ENCODE measurements at regions of chr19 and their contacts with region 1.

Region 1: DNA sequence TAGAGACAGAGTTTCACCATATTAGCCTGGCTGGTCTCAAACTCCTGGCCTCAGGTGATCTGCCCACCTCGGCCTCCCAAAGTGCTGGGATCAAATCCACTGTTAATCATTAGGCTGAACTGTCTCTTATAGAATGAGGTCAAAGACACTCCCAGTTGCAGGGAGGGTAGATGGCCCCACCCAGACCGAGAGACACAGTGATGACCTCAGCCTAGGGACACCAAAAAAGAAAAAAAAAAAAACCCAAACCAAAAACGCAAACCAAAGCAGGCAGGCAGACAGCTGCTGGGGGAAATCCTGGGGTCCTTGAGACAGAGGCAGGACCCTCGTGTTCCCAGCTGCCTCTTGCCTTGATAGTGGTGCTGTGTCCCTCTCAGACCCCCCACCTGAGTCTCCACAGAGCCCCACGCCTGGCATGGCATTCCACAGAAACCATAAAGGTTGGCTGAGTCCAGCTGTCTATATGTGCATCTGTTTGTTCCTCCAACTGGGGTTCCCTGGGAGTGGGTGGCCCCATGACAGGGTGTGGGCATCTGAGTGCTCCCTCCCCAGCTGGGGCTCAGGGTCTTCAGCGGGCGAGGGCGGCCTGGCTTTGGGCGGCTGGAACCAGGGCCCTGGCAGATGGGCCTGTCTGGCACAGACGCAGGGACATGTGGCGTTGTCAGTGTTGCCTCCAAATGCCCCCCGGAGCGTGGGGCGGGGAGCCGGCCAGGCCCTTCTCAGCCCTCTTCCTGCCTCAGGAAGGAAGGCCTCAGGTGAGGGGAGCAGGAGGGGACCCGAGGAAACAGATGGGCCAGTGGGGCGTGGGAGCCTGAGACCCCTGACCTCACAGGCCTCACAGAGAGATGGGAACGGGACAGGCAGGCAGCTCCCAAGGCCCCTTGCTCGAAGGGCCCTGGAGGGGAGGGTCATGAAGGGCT is 5.2 kb downstream of the DAND5 start:
- DNase-seq: no peak
- H3K4me3 ChIP-seq: no peak overlapping the region
- H3K27ac ChIP-seq: no peak overlapping the region
- H3K4me1 ChIP-seq: no peaks in the 10 kb centered on the region
- H3K27me3 ChIP-seq: no peaks in the 10 kb centered on the region
- CTCF ChIP-seq: no peak
- POLR2A ChIP-seq: no peak

Region 2: GRCh38 chr19:12847159-12848139 is 127.1 kb before region 1 on chr19:
- CTCF ChIA-PET with region 1: no interaction called
- POLR2A ChIA-PET with region 1: no interaction called
- dilution Hi-C with region 1: no loop called
- intact Hi-C with region 1: no loop called
- DNase-seq: peak; percentile 72
- H3K4me3 ChIP-seq: no peak overlapping the region
- H3K27ac ChIP-seq: no peak overlapping the region
- H3K4me1 ChIP-seq: peaks cover 2% of the 10 kb centered on the region
- H3K27me3 ChIP-seq: no peaks in the 10 kb centered on the region
- CTCF ChIP-seq: peak; percentile 95 to 100
- POLR2A ChIP-seq: no peak

Region 3: GRCh38 chr19:12945479-12946091 is 29.0 kb before region 1 on chr19 and contains the start of gene RAD23A:
- CTCF ChIA-PET with region 1: no interaction called
- POLR2A ChIA-PET with region 1: no interaction called
- dilution Hi-C with region 1: no loop called
- intact Hi-C with region 1: no loop called
- DNase-seq: peak; percentile 99
- H3K4me3 ChIP-seq: peak within 1 kb of the TSS; percentile 72 to 92 (median 72)
- H3K27ac ChIP-seq: peak within 1 kb of the TSS; percentile 76
- H3K4me1 ChIP-seq: peaks cover 18% of the 10 kb centered on the region
- H3K27me3 ChIP-seq: no peaks in the 10 kb centered on the region
- CTCF ChIP-seq: no peak
- POLR2A ChIP-seq: peak; percentile 98
- total RNA-seq, gene RAD23A: 96.7 and 102 TPM in 2 replicates

Region 4: DNA sequence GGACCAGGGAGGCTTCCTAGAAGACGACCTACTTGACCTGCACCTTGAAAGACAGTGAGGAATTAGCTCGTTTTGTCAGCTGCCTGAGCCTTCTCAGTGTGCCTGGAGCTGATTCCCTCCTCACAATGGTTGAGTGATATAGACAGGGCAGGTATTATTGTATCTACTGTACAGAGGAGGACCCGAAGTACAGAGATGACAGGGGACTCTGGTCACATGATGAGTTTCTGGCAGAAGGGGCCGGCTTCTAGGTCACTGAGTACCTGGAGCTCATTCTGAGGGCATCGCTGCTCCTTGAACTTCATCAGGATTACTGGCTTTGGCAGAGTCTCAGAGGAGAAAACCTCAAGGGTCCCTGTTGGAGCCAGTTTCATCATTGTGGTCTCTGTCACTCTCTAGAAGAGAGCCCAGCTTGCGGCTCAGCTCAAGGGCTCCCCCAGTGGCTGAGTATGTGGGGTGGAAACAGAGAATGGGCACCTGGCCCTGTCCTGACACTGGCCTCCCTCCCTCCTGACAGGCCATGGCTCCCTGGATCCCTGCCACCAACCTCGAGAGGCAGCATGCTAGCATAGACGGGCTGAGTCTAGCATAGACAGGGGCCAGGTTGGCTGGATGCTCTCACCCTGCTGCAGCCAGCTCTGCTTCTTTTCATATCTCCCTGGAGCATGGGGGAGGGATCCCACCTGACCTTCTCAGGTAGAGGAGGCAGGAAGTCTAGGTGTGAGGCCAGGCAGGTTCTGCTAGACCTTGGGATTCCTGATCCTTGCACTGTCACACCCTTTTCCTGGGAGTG is 59.5 kb after region 1 on chr19:
- CTCF ChIA-PET with region 1: interaction called, 32 read pairs
- POLR2A ChIA-PET with region 1: no interaction called
- dilution Hi-C with region 1: no loop called
- intact Hi-C with region 1: no loop called
- DNase-seq: no peak
- H3K4me3 ChIP-seq: no peak overlapping the region
- H3K27ac ChIP-seq: no peak overlapping the region
- H3K4me1 ChIP-seq: peaks cover 15% of the 10 kb centered on the region
- H3K27me3 ChIP-seq: no peaks in the 10 kb centered on the region
- CTCF ChIP-seq: peak; percentile 77 to 86
- POLR2A ChIP-seq: no peak

Region 5: GRCh38 chr19:13099073-13099999 is 124.8 kb after region 1 on chr19:
- CTCF ChIA-PET with region 1: interaction called, 543 read pairs
- POLR2A ChIA-PET with region 1: interaction called, 6 read pairs
- dilution Hi-C with region 1: no loop called
- intact Hi-C with region 1: loop called (anchors 1 kb)
- DNase-seq: peak; percentile 79
- H3K4me3 ChIP-seq: peak overlapping the region in 2 of 3 experiments; percentile 10 to 17
- H3K27ac ChIP-seq: peak overlapping the region; percentile 89
- H3K4me1 ChIP-seq: peaks cover 54% of the 10 kb centered on the region
- H3K27me3 ChIP-seq: no peaks in the 10 kb centered on the region
- CTCF ChIP-seq: no peak
- POLR2A ChIP-seq: peak; percentile 84

Region 6: GRCh38 chr19:13277104-13277809 is 302.7 kb after region 1 on chr19:
- CTCF ChIA-PET with region 1: interaction called, 15 read pairs
- POLR2A ChIA-PET with region 1: no interaction called
- dilution Hi-C with region 1: no loop called
- intact Hi-C with region 1: no loop called
- DNase-seq: peak; percentile 78
- H3K4me3 ChIP-seq: no peak overlapping the region
- H3K27ac ChIP-seq: peak overlapping the region; percentile 4
- H3K4me1 ChIP-seq: peaks cover 5% of the 10 kb centered on the region
- H3K27me3 ChIP-seq: no peaks in the 10 kb centered on the region
- CTCF ChIP-seq: peak; percentile 41 to 61
- POLR2A ChIP-seq: no peak

Measured in endothelial cell of umbilical vein (primary cell).